OCI-LY7 (cell line): ENCODE measurements at regions of chr4 and their contacts with region 1.

Region 1: GRCh38 chr4:184384056-184384809 is 90.1 kb downstream of the IRF2 start:
- DNase-seq: peak; percentile 92
- H3K4me3 ChIP-seq: peak overlapping the region; percentile 45
- H3K27ac ChIP-seq: peak overlapping the region; percentile 29
- H3K4me1 ChIP-seq: peaks cover 70% of the 10 kb centered on the region
- CTCF ChIP-seq: no peak

Region 2: DNA sequence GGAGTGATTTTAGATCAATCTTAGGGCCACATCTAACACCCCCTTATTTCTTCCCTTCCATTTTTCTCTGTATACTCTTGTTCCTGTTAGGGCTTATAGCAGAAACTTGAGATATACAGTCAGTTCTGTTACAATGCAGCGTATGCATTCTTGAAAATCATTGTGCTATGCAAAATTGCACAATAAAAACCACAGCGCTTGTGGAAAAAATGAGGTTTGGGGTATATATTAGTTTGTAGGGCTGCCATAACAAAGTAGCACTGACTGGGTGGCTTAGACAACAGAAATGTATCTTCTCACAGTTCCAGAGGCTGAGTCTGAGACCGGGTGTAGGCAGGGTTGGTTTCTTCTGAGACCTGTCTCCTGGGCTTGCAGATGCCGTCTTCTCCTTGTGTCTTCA is 1226.2 kb before region 1 on chr4:
- CTCF ChIA-PET with region 1: no interaction called
- POLR2A ChIA-PET with region 1: no interaction called
- intact Hi-C with region 1: no loop called
- DNase-seq: no peak
- H3K4me3 ChIP-seq: no peak overlapping the region
- H3K27ac ChIP-seq: no peak overlapping the region
- H3K4me1 ChIP-seq: no peaks in the 10 kb centered on the region
- CTCF ChIP-seq: no peak

Region 3: DNA sequence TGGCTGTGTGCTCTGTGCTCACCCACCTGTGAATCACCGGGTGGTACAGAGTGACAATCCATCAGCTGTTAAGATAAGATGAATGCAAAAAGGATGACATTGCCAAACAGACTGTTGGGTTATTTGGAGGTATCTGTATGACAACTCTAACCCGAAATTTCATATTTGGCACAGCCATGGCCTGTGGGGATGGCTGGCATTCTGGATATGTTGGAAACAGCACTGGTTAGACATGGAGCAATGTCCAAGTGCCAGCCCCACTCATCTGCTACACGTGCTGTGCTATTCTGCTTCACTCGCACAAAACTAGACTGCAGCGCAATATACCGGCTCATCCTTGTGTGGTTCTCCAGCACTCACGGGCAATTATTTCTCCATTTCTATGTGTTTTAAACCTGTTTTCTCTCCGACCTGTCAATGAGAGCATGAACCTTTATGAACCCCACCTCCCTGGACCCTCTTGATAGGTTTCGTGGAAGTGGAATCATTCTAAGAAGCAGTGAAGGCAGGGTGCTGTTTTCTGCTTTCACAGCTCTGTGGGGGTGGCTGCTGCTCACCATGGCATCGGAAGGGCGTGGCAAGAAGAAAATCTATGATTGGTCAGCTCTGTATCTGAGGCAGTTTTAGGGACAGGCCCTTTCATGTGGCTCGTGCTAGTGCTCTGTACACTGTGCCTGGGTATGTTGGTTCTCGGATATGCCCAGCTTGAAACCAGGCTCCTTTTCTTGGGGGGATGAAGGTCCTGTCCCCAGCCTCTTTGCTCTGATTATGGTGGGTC is 261.4 kb before region 1 on chr4:
- CTCF ChIA-PET with region 1: no interaction called
- POLR2A ChIA-PET with region 1: no interaction called
- intact Hi-C with region 1: no loop called
- DNase-seq: no peak
- H3K4me3 ChIP-seq: no peak overlapping the region
- H3K27ac ChIP-seq: no peak overlapping the region
- H3K4me1 ChIP-seq: no peaks in the 10 kb centered on the region
- CTCF ChIP-seq: no peak

Region 4: DNA sequence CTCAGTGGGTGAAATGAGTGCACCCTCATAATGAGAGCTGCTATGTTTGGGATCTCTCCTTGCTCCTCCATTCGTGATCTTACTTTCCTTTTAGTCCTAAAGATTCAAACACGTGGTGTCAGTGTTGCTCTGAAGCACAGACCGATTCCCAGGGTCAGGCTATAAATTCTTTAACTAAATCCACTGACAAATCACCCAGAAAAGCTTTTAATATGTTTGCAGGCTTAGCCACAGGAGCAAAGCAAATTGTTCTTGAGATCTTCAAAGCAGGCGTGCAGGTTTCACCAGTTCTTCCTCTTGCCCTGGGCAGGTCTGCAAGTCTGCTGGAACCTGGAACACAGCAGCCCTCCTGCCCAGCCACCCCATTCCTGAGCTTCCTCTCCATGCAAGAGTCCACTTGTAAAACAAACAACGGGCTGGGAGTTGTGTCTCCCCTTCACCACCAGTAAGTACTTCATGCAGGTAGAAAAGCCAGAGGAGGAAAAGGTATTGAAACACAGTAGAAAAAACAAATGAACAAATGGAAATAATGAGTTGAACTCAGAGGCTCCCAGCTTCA is 96.5 kb before region 1 on chr4:
- CTCF ChIA-PET with region 1: no interaction called
- POLR2A ChIA-PET with region 1: interaction called, 6 read pairs
- intact Hi-C with region 1: loop called (anchors 1 kb)
- DNase-seq: peak; percentile 55
- H3K4me3 ChIP-seq: peak overlapping the region; percentile 58
- H3K27ac ChIP-seq: peak overlapping the region; percentile 96
- H3K4me1 ChIP-seq: peaks cover 99% of the 10 kb centered on the region
- CTCF ChIP-seq: peak; percentile 39; the same call in 1 of the 2 replicates

Region 5: GRCh38 chr4:184329659-184330400 is 54.4 kb before region 1 on chr4:
- CTCF ChIA-PET with region 1: no interaction called
- POLR2A ChIA-PET with region 1: interaction called, 11 read pairs
- intact Hi-C with region 1: loop called (anchors 1 kb)
- DNase-seq: no peak
- H3K4me3 ChIP-seq: no peak overlapping the region
- H3K27ac ChIP-seq: peak overlapping the region; percentile 82
- H3K4me1 ChIP-seq: peaks cover 77% of the 10 kb centered on the region
- CTCF ChIP-seq: no peak

Region 6: GRCh38 chr4:184343502-184344177 is 40.6 kb before region 1 on chr4:
- CTCF ChIA-PET with region 1: interaction called, 3 read pairs
- POLR2A ChIA-PET with region 1: interaction called, 7 read pairs
- intact Hi-C with region 1: loop called (anchors 1 kb)
- DNase-seq: peak; percentile 64
- H3K4me3 ChIP-seq: peak overlapping the region; percentile 61
- H3K27ac ChIP-seq: peak overlapping the region; percentile 26
- H3K4me1 ChIP-seq: peaks cover 66% of the 10 kb centered on the region
- CTCF ChIP-seq: no peak

Region 7: DNA sequence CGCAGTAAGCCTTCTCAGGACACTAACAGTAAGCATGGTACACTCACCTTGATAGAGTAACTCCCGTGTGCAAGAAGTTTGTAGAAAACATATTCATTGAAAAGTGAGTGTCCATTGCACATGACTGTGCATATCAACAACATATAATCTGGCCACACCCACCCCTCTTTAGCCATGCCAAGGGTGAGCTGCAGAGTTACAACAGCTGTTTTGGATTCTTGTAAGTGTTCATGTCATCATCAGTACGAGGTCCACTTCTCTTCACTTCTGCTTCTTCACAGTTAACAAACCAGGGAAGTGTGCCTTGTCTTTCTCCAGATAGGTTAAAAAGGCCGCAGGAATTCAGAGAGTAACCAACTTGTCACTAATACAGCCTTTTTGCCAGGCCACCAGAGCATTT is 26.5 kb before region 1 on chr4:
- CTCF ChIA-PET with region 1: no interaction called
- POLR2A ChIA-PET with region 1: interaction called, 12 read pairs
- intact Hi-C with region 1: no loop called
- DNase-seq: no peak
- H3K4me3 ChIP-seq: no peak overlapping the region
- H3K27ac ChIP-seq: no peak overlapping the region
- H3K4me1 ChIP-seq: peaks cover 42% of the 10 kb centered on the region
- CTCF ChIP-seq: no peak

Region 8: DNA sequence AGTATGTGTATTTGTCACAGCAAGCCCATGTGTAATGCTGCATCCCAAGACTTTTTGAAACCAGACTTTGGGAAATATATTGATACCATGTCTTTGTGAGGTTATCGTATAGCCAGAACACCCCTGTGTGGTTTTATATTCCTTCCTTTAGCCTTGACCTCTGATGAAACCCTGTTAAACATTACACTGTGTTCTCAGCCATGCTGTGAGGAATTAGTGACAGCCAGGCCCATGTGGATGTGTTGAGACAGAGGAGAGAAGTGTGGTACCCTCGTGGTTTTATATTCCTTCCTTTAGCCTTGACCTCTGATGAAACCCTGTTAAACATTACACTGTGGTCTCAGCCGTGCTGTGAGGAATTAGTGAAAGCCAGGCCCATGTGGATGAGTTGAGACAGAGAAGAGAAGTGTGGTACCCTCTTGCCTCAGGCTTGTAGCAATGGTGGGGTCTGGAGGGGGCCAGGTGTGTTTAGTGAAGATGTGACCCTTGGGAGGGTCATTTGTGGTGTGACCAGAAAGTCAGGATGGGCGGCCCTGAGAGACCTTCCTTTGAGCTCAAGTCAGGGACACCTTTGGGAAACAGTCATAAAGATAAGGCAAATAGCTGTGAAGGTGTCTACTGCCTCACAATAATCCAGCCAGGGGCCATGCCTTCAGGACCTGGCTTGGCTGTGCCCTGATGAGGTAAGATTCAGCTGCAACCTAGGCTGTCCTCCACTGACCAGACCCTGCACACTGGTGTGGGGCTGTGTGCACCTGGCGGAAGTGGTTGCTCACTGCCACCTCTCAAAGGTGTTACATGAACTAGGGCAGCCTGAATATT is 19.9 kb before region 1 on chr4:
- CTCF ChIA-PET with region 1: interaction called, 5 read pairs
- POLR2A ChIA-PET with region 1: interaction called, 12 read pairs
- intact Hi-C with region 1: no loop called
- DNase-seq: peak; percentile 82
- H3K4me3 ChIP-seq: no peak overlapping the region
- H3K27ac ChIP-seq: peak overlapping the region; percentile 18
- H3K4me1 ChIP-seq: peaks cover 37% of the 10 kb centered on the region
- CTCF ChIP-seq: no peak

Region 9: DNA sequence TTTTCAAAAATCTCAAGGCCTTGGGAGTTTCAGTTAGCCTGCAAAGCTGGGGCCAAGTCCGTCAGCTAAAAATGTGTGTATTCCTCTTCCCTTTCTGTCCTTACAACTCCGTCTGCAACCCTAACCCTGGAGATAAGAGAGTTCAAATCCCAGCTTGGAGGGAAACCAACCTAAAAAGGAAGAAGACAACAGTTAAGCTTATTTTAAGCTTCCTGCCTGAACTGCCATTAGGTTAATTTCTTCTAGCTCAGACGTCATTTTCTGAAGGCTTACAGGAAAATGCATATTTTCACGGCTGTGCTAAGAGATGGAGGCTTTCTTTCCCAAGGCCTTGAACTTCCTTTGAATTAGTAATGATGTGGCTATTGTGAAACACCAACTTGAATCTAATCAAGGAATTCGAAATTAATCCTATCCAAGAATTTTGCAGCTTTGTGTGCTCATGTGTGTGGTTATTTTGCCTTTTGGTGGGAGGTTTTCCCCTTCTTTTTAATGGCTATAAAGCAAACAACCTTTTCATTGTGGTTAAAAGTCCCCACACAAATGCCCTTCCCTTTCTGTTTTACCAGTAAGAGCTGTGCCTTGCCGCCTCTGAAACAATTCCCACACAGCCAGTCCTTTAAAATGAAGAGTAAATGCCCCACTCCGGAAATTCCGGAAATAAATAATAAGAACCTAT is 13.4 kb before region 1 on chr4:
- CTCF ChIA-PET with region 1: interaction called, 5 read pairs
- POLR2A ChIA-PET with region 1: interaction called, 12 read pairs
- intact Hi-C with region 1: no loop called
- DNase-seq: no peak
- H3K4me3 ChIP-seq: no peak overlapping the region
- H3K27ac ChIP-seq: no peak overlapping the region
- H3K4me1 ChIP-seq: peaks cover 39% of the 10 kb centered on the region
- CTCF ChIP-seq: no peak